IMR-90 (cell line): ENCODE measurements at regions of chr1 and their contacts with region 1.

Region 1: DNA sequence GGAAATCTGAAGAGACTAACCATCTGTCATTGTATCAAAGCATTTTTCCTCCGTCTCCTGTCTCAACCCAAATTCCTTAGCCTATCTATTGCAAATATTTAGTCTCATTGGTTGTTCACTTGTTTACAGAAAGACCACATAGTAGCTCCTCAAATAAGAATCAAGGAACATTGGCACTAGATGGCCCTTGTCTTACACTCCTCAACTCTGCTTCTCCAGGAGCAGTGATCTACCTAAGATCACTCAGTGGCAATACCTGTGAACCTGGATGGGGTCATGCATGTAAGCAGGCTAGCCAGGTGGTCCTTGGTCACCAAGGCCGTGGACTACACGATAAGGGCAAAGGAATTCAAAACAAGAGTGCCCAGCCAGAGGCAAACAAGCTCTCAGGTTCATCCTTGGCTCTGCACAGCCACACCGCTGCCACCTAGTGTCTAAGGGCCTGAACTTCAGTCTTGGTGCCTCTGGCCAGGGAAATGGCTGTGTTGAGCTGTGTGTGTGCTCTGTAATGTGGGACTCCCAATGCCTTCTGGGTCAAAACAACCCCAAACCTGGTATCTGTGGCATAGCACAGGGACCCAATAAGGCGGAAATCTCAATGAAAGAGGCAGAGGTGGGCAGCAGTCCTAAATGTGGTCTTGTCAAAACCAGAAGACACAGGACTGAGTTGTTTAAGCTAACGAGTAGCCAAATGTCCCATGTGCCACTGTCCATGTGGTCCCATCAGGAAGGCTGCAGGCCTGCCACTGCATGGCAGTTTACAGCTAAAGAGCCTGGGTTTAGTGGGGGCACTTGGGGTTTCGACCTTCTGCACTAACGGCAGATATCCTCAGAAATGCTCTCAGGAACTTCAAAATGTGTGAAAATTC is 54.5 kb downstream of the GPR161 start:
- DNase-seq: peak; percentile 79
- ATAC-seq: peak; percentile 89
- H3K4me3 ChIP-seq: no peak overlapping the region
- H3K27ac ChIP-seq: no peak overlapping the region
- H3K4me1 ChIP-seq: peaks cover 9% of the 10 kb centered on the region; the same call in 1 of the 2 replicates
- H3K27me3 ChIP-seq: no peaks in the 10 kb centered on the region
- CTCF ChIP-seq: peak; percentile 83
- POLR2A ChIP-seq: no peak
- RAD21 ChIP-seq: peak; percentile 78

Region 2: DNA sequence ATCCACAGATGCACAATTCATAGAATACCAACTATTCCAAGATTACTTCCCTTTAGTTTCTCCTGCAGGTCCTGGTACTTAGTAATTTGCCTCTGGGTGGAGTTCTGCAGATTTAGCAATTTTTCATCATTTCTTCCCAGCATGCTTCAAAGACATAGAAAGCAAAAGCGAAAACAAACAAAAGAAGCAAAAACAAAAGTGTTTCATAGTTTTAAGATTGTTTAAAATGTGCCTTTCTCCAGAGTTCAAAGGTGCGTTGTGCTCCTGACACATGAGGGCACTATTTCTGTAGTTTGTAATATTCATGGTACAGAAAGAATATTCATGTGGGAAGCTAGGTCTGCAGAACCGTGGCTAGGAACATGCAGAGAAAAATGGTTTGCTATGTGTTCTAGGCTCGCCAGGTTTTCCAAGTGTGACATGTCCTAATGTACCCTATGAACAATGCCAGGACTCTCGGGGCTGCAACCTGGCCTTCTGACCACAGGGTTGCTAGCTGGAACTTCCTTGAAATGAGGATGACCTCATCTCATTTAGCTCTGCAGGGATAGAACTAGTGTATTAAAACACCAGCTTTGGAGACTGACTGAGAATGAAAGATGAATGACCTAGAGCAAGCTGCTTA is 482.2 kb before region 1 on chr1:
- CTCF ChIA-PET with region 1: no interaction called
- POLR2A ChIA-PET with region 1: no interaction called
- dilution Hi-C with region 1: no loop called
- in situ Hi-C with region 1: no loop called
- intact Hi-C with region 1: no loop called
- DNase-seq: peak; percentile 22
- ATAC-seq: peak; percentile 73
- H3K4me3 ChIP-seq: no peak overlapping the region
- H3K27ac ChIP-seq: no peak overlapping the region
- H3K4me1 ChIP-seq: no peaks in the 10 kb centered on the region
- H3K27me3 ChIP-seq: peaks cover 5% of the 10 kb centered on the region
- CTCF ChIP-seq: peak; percentile 38
- POLR2A ChIP-seq: no peak
- RAD21 ChIP-seq: peak; percentile 43

Region 3: GRCh38 chr1:167715157-167715999 is 366.9 kb before region 1 on chr1:
- CTCF ChIA-PET with region 1: interaction called, 3 read pairs
- POLR2A ChIA-PET with region 1: no interaction called
- dilution Hi-C with region 1: no loop called
- in situ Hi-C with region 1: loop called (anchors 10 kb)
- intact Hi-C with region 1: no loop called
- DNase-seq: peak; percentile 83
- ATAC-seq: peak; percentile 51
- H3K4me3 ChIP-seq: peak overlapping the region; percentile 53
- H3K27ac ChIP-seq: peak overlapping the region; percentile 37
- H3K4me1 ChIP-seq: no peaks in the 10 kb centered on the region
- H3K27me3 ChIP-seq: peaks cover 2% of the 10 kb centered on the region; the same call in 1 of the 2 replicates
- CTCF ChIP-seq: peak; percentile 94
- POLR2A ChIP-seq: no peak
- RAD21 ChIP-seq: peak; percentile 46

Region 4: DNA sequence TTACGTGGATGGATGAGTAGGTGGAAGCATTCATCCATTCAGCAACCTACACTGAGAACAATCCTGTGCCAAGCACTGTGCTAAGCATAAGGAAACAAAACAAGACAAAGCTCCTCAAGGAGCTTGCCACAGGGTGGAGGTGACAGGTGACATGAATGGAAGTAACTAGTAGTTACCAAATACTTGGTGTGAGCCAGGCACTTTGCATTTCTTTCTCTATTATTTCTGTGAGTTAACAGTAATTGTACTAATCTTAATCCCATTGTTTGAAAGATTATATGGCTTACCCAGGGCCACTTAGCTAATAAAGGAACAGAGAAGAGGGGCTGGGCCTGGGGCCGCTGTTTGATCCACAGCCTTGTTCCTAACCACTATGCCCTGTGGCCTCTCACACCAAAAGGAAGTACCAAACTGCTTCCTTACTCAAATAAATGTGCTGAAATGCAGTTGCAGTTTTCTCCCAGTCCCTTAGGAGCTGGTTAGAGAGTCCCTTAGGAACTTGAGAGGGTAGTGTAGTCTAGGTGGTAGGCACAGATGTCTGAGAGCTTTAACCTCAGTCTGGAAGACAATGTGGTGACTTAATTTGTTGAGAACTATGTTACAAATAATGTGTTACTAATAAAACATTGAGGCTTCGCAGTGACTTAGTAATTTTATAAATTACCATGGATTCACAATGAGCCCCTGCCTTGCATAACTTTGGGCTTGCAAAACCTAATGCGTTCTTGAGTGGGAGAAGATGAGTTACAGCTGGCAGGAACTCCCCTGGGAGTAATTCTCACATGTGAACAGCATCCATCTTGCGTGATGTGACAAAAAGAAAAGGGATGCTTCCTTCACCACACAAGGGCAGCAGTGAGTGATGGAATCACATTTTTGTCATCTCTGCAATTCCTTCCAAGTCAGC is 290.7 kb before region 1 on chr1:
- CTCF ChIA-PET with region 1: interaction called, 6 read pairs
- POLR2A ChIA-PET with region 1: no interaction called
- dilution Hi-C with region 1: no loop called
- in situ Hi-C with region 1: no loop called
- intact Hi-C with region 1: loop called (anchors 5 kb)
- DNase-seq: peak; percentile 99
- ATAC-seq: peak; percentile 83
- H3K4me3 ChIP-seq: no peak overlapping the region
- H3K27ac ChIP-seq: peak overlapping the region; percentile 58
- H3K4me1 ChIP-seq: peaks cover 18% of the 10 kb centered on the region
- H3K27me3 ChIP-seq: no peaks in the 10 kb centered on the region
- CTCF ChIP-seq: peak; percentile 22; the same call in 1 of the 2 replicates
- POLR2A ChIP-seq: no peak
- RAD21 ChIP-seq: peak; percentile 15; the same call in 1 of the 2 replicates

Region 5: DNA sequence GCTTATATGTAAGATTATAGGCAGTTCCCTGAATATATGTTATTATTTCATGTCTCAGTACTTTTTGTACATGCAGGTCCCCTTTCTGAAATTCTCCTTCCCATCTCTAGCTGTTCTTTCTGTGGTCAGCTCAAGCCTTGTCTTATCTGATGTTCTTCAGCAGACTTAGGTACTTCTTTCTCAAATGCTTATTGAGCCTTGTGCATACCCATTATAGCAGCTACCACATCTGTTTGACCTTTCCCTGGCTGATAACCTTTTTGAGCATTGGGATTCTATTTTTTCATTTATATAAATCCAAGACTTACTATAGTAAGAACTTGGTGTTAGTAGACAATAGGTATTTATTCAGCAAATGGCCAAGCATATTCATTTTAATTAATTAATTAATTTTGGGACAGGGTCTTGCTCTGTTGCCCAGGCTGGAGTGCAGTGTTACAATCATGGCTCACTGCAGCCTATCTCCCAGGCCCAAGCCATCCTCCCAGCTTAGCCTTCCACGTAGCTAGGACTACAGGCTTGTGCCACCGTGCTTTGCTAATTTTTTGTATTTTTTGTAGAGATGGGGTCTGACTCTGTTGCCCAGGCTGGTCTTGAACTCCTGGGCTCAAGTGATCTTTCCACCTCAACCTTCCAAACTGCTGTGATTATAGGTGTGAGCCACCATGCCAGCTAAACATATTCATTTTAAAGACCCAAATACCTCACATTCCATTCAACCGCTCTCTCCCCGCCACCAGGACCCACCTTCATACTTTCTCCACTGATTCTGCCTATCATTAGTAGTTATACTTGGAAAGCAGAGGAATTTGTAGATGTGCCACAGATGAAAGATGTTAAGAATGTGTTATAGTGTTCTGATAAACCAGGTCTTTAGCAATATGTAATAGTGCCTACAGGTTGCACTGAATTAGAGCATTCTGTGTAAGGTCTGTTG is 113.2 kb after region 1 on chr1:
- CTCF ChIA-PET with region 1: no interaction called
- POLR2A ChIA-PET with region 1: no interaction called
- dilution Hi-C with region 1: no loop called
- in situ Hi-C with region 1: no loop called
- intact Hi-C with region 1: no loop called
- DNase-seq: no peak
- ATAC-seq: no peak
- H3K4me3 ChIP-seq: no peak overlapping the region
- H3K27ac ChIP-seq: no peak overlapping the region
- H3K4me1 ChIP-seq: no peaks in the 10 kb centered on the region
- H3K27me3 ChIP-seq: no peaks in the 10 kb centered on the region
- CTCF ChIP-seq: no peak
- POLR2A ChIP-seq: no peak
- RAD21 ChIP-seq: no peak